ENCODE measurements at regions of chr4 and their contacts with region 1.

Region 1: GRCh38 chr4:1752284-1753041 is 31.1 kb downstream of the TACC3 start:
- DNase-seq: peak in 2 of 3 donors; percentile 39 to 57
- ATAC-seq: peak; percentile 52
- H3K4me3 ChIP-seq: no peak overlapping the region
- H3K4me1 ChIP-seq: peaks cover 8% of the 10 kb centered on the region
- CTCF ChIP-seq: no peak

Region 2: DNA sequence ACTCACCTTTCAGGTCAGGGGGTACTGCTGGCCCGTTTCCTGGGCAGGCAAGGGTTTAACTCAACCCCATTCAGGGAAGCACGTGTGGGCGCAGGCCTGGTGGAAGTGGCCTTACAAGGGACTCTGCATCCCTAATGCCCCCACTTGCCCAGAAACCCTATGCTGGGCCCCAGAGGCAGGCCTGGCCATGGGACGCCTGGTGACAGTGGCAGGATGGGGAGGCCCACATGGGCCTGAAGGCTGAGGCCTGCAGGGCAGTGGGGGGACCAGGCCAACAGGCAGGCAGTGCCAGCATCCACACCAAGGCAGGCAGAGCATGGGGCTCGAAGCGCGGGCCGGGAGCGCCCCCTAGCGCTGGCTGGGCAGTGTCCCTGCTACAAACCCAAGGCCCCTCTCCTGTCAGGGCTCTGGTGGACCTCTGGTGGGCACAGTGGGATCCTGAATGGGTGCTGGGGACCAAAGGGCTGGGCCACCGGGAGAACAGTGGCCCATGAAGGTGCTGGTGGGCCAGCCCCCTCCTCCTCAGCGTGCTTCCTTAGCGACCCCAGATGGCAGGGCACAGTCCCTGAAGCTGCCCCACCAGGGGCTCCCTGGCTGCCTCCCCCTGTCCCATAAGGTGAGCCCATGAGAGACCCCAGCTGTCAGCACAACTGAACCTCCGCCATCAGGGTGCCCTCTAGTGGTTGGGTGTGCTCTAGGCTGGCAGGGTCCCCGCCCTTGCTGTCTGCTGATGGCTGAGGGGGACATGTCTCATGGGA is 57.5 kb after region 1 on chr4:
- intact Hi-C with region 1: loop called in 1 of 2 experiments (anchors 10 kb)
- DNase-seq: peak; percentile 67 to 85 (median 80)
- ATAC-seq: peak; percentile 87
- H3K4me3 ChIP-seq: no peak overlapping the region
- H3K4me1 ChIP-seq: no peaks in the 10 kb centered on the region
- CTCF ChIP-seq: peak; percentile 82

Region 3: GRCh38 chr4:2041234-2042130 is 289.0 kb after region 1 on chr4:
- intact Hi-C with region 1: no loop called
- DNase-seq: peak; percentile 82 to 92 (median 88)
- ATAC-seq: peak; percentile 79
- H3K4me3 ChIP-seq: peak overlapping the region; percentile 46
- H3K4me1 ChIP-seq: peaks cover 8% of the 10 kb centered on the region
- CTCF ChIP-seq: no peak

Measured in mucosa of descending colon (tissue), 3 donors.